Aorta (tissue), 5 donors: ENCODE measurements at regions of chr4 and their contacts with region 1.

Region 1: GRCh38 chr4:48906206-48907173 is at the start of gene OCIAD2:
- DNase-seq: peak; percentile 77 to 82
- ATAC-seq: peak; percentile 71
- H3K4me3 ChIP-seq: peak within 1 kb of the TSS; percentile 37 to 74
- H3K27ac ChIP-seq: no peak within 1 kb of the TSS
- H3K4me1 ChIP-seq: no peaks in the 10 kb centered on the region
- H3K27me3 ChIP-seq: no peaks in the 10 kb centered on the region
- total RNA-seq, gene OCIAD2: 19.7 to 22.4 TPM

Region 2: DNA sequence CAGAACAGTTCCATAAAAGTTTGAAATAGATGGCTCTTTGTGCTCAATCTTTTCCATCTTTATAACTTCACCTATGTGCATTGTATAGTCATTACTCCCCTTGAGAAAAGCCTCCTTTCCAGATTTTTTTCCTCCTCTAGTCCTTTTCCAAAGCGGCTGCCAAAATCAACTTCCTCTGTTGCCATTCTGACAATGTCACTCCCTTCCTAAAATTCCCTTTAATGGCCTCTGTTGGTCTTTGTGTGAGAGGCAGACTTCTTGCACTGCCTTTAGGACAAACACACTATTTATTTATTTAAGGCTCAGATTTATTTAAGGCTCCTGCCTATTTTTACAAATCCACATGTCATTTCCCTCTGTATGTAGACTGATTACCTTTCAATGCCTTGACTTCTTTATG is 104.8 kb before region 1 on chr4:
- intact Hi-C with region 1: loop called in 1 of 2 experiments (anchors 10 kb)
- DNase-seq: no peak
- ATAC-seq: peak; percentile 86
- H3K4me3 ChIP-seq: peak overlapping the region in 1 of 2 donors; percentile 19
- H3K27ac ChIP-seq: no peak overlapping the region
- H3K4me1 ChIP-seq: peaks cover 3 to 6% of the 10 kb centered on the region in 2 donors
- H3K27me3 ChIP-seq: no peaks in the 10 kb centered on the region

Region 3: DNA sequence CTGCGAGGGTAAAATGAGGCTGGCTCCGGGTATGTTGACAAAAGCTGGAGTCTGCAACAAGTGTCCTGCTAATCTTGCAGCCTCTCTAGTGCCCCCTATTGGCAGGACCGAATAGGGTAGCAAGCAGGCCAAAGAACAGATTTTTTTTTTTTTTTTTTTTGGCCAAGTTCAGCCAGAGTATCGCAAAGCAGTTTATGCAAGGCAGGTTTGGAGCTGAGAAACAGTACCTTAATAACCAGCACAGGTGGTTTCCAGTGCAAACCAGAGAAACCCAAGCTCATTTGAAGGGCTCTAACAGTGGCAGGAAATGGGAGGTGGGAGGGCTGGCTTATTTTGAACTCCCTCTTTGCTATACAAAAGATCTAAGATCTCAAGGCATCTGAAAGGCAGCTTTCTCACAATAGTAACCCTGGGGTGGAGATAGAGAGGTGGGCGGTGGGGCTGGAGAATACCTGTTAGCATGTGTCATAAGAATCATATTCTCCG is 38.3 kb after region 1 on chr4:
- intact Hi-C with region 1: loop called in 1 of 2 experiments (anchors 5 kb)
- DNase-seq: no peak
- ATAC-seq: no peak
- H3K4me3 ChIP-seq: no peak overlapping the region
- H3K27ac ChIP-seq: no peak overlapping the region
- H3K4me1 ChIP-seq: peaks cover 0 to 2% of the 10 kb centered on the region in 2 donors
- H3K27me3 ChIP-seq: no peaks in the 10 kb centered on the region